ENCODE measurements at regions of chr16 and their contacts with region 1.

Region 1: DNA sequence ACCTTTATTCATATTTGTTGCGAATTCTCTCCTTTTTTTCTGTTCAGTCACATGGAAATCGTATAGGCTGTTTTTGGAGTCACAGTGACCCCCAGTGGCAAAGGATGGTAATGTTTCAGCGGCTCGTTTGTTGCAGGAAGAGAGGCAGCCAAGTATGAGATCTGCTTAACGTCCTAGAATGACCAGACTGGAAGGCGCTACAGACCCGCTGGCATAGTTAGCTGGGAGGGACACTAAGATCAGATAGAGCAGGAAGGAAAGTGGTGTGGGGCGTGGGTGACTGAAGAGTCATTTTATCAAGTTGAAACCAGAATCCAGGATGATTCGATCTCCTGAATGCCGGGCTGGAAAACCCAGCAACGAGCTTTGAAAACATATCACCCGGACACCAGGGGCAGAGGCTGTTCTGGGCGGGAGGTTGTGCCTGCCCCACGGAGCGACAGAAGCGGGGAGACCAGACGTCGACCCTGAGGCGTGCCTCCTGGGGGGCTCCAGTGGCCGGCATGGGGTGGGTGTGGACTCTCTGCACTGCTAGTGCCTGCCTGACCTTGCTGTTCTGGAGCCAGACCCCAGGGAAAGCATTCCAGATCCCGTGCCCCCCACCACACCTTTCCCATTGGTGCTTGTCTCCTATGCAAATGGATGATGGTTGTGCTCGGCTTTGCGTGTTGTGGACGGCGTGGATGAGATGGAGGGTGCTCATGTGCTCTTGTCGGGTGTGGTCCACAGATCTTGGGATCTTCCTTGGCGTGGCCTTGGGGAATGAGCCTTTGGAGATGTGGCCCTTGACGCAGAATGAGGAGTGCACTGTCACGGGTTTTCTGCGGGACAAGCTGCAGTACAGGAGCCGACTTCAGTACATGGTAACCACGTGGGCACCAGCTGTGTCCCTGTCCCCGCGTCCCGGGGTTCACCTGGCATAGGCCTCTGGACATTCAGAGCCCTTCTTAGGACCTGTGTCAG is 7.7 kb downstream of the IL34 start:
- DNase-seq: peak; percentile 88
- ATAC-seq: peak; percentile 86
- H3K4me3 Mint-ChIP-seq: no peak overlapping the region
- H3K27ac Mint-ChIP-seq: no peak overlapping the region
- H3K4me1 Mint-ChIP-seq: peaks cover 4% of the 10 kb centered on the region
- H3K27me3 Mint-ChIP-seq: no peaks in the 10 kb centered on the region

Region 2: GRCh38 chr16:70162041-70162451 is 492.0 kb before region 1 on chr16:
- CTCF ChIA-PET with region 1: interaction called, 3 read pairs
- POLR2A ChIA-PET with region 1: no interaction called
- intact Hi-C with region 1: loop called (anchors 10 kb)
- DNase-seq: no peak
- ATAC-seq: no peak
- H3K4me3 Mint-ChIP-seq: no peak overlapping the region
- H3K27ac Mint-ChIP-seq: peak overlapping the region; percentile 11
- H3K4me1 Mint-ChIP-seq: no peaks in the 10 kb centered on the region
- H3K27me3 Mint-ChIP-seq: no peaks in the 10 kb centered on the region

Region 3: GRCh38 chr16:70372921-70373728 is 281.0 kb before region 1 on chr16:
- CTCF ChIA-PET with region 1: interaction called, 6 read pairs
- POLR2A ChIA-PET with region 1: no interaction called
- intact Hi-C with region 1: loop called in 1 of 2 experiments (anchors 1 kb)
- DNase-seq: no peak
- ATAC-seq: no peak
- H3K4me3 Mint-ChIP-seq: no peak overlapping the region
- H3K27ac Mint-ChIP-seq: no peak overlapping the region
- H3K4me1 Mint-ChIP-seq: peaks cover 7% of the 10 kb centered on the region
- H3K27me3 Mint-ChIP-seq: no peaks in the 10 kb centered on the region

Region 4: DNA sequence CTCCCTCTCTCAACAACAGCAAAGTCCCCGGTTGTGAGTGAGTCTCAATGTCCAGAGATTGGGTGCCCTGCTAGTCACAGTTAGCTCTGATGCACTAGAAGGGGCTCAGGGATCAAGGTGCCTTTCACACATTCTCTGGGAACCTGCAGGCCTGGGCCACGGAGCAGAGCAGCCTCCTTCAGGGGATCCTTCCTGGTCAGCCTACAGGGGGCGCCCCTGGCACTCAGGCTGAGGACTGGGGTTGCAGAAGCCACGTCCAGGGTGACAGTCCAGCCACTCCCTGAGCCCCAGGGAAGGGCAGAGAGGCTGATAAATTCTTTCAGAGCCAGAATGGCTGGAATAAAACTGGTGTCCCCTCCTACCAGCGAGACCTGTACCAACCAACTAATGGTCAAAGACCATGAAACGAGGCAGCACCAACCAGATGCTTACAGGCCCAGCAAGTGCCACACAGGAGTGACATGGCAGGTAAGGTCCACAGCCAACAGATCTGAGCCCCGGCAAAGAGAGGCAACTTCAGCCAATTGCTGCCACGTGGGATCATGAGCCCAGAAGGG is 258.7 kb before region 1 on chr16:
- CTCF ChIA-PET with region 1: interaction called, 3 read pairs
- POLR2A ChIA-PET with region 1: no interaction called
- intact Hi-C with region 1: loop called in 1 of 2 experiments (anchors 1 kb)
- DNase-seq: peak; percentile 84
- ATAC-seq: peak; percentile 95
- H3K4me3 Mint-ChIP-seq: no peak overlapping the region
- H3K27ac Mint-ChIP-seq: no peak overlapping the region
- H3K4me1 Mint-ChIP-seq: peaks cover 4% of the 10 kb centered on the region
- H3K27me3 Mint-ChIP-seq: no peaks in the 10 kb centered on the region

Region 5: GRCh38 chr16:70529051-70529777 is 124.9 kb before region 1 on chr16:
- CTCF ChIA-PET with region 1: interaction called, 5 read pairs
- POLR2A ChIA-PET with region 1: no interaction called
- intact Hi-C with region 1: loop called in 1 of 2 experiments (anchors 1 kb)
- DNase-seq: no peak
- ATAC-seq: peak; percentile 42
- H3K4me3 Mint-ChIP-seq: peak overlapping the region; percentile 41
- H3K27ac Mint-ChIP-seq: peak overlapping the region; percentile 74
- H3K4me1 Mint-ChIP-seq: peaks cover 51% of the 10 kb centered on the region
- H3K27me3 Mint-ChIP-seq: no peaks in the 10 kb centered on the region

Region 6: DNA sequence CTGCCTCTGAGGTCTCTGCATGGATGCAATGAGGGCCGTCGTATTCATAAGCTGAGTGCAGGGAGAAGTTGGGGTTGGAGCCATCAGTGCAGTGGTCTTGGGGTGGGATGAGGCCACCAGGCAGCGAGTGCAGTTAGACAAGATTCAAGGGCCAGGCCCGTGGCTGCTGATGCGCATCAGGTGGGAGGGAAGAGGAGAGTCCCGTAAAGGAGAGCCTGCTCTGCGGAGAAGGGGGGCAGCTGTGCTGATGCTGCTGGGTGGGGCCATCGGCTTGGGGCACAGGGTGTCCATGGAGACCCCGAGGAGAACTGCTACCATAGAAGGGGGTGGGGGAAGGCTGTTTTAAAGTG is 11.9 kb after region 1 on chr16:
- CTCF ChIA-PET with region 1: interaction called, 17 read pairs
- POLR2A ChIA-PET with region 1: no interaction called
- intact Hi-C with region 1: no loop called
- DNase-seq: peak; percentile 2
- ATAC-seq: no peak
- H3K4me3 Mint-ChIP-seq: no peak overlapping the region
- H3K27ac Mint-ChIP-seq: no peak overlapping the region
- H3K4me1 Mint-ChIP-seq: no peaks in the 10 kb centered on the region
- H3K27me3 Mint-ChIP-seq: no peaks in the 10 kb centered on the region